ENCODE measurements at regions of chr9 and their contacts with region 1.

Region 1: DNA sequence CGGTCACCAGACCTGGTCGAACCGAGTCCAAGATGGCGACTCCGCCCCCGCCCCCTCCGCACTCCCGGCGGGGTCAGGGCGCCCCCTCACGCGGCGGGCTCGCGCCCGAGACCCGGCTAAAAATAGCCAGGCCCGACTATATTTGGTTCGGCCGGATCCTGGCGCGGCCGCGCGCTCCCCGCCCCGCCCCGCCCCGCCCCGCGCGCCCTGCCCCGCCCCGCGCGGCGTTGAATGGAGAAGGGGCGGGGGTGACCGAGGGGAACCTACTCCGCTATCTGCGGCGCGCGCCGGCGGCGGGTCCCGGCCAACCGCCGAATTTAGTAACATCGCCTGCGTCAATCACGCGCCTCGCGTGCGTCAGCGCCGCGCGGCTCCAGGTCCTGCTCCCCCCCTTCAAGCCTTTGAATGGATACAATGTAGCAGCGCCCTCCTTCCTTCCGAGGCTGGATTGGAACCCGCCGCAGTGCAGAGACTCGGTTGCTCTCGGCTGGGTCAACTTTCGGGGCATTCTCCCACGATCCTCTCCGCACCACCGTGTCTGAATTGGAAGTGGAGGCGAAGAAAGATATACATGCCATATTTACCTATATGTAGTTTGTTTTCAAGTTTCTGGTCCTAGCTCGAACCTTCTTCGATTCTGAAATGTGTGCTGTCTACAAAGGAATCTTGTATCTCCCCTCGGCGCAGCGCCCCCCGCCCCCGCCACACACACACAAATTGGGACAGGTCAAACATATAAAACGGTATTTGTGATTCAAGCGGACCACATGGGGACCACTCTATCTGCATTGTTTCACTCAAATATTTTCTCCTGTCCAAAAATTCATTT is 1.6 kb upstream of the NR4A3 start:
- DNase-seq: peak; percentile 94 to 95
- ATAC-seq: peak; percentile 67 to 80 (median 73)
- H3K4me3 ChIP-seq: peak overlapping the region; percentile 67 to 90 (median 82)
- H3K27ac ChIP-seq: peak overlapping the region; percentile 84 to 100 (median 98)
- H3K4me1 ChIP-seq: peaks cover 5 to 54% (median 32%) of the 10 kb centered on the region in 9 donors
- H3K27me3 ChIP-seq: peaks cover 0 to 30% (median 9%) of the 10 kb centered on the region in 7 donors
- CTCF ChIP-seq: peak in 5 of 9 donors; percentile 8 to 47 (median 34)

Region 2: GRCh38 chr9:99184475-99185347 is 635.4 kb before region 1 on chr9:
- intact Hi-C with region 1: loop called in 1 of 10 experiments (anchors 10 kb)
- DNase-seq: peak; percentile 81 to 89
- ATAC-seq: peak; percentile 79 to 95 (median 92)
- H3K4me3 ChIP-seq: peak overlapping the region in 8 of 10 donors; percentile 9 to 46 (median 34)
- H3K27ac ChIP-seq: peak overlapping the region in 6 of 10 donors; percentile 0 to 54 (median 43)
- H3K4me1 ChIP-seq: peaks cover 0 to 22% (median 9%) of the 10 kb centered on the region in 9 donors
- H3K27me3 ChIP-seq: no peaks in the 10 kb centered on the region
- CTCF ChIP-seq: peak; percentile 91 to 97 (median 96)

Region 3: DNA sequence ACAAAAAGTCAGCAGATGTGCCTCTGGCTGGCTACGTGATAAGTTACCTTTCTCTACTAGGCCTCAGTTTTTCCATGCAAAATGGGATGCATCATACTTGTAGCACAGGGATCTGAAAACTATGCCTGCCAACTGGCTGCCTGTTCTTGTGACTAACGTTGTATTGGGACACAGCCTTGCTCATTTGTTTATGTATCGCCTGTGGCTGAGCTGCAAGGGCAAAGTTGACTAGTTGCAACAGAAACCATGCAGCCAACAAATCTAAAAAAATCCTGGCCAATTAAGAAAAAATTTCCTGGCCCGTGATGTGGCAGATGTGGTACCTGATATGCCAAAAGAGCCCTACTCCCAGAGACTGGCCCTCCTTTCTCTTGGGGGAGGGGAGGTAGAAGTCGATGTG is 466.7 kb before region 1 on chr9:
- intact Hi-C with region 1: loop called in 7 of 10 experiments (anchors 2 to 10 kb)
- DNase-seq: no peak
- ATAC-seq: no peak
- H3K4me3 ChIP-seq: no peak overlapping the region
- H3K27ac ChIP-seq: peak overlapping the region in 1 of 10 donors; percentile 43
- H3K4me1 ChIP-seq: peaks cover 0 to 23% (median 12%) of the 10 kb centered on the region in 9 donors
- H3K27me3 ChIP-seq: no peaks in the 10 kb centered on the region
- CTCF ChIP-seq: no peak

Region 4: GRCh38 chr9:99451112-99451606 is 368.9 kb before region 1 on chr9:
- intact Hi-C with region 1: loop called in 3 of 10 experiments (anchors 5 kb)
- DNase-seq: peak; percentile 17 to 67
- ATAC-seq: peak; percentile 84 to 99 (median 97)
- H3K4me3 ChIP-seq: no peak overlapping the region
- H3K27ac ChIP-seq: peak overlapping the region in 8 of 10 donors; percentile 53 to 79 (median 63)
- H3K4me1 ChIP-seq: peaks cover 0 to 15% (median 4%) of the 10 kb centered on the region in 9 donors
- H3K27me3 ChIP-seq: peaks cover 0 to 13% (median 0%) of the 10 kb centered on the region in 7 donors
- CTCF ChIP-seq: no peak

Region 5: GRCh38 chr9:99778308-99778707 is 41.8 kb before region 1 on chr9:
- intact Hi-C with region 1: no loop called
- DNase-seq: no peak
- ATAC-seq: no peak
- H3K4me3 ChIP-seq: no peak overlapping the region
- H3K27ac ChIP-seq: no peak overlapping the region
- H3K4me1 ChIP-seq: no peaks in the 10 kb centered on the region
- H3K27me3 ChIP-seq: no peaks in the 10 kb centered on the region
- CTCF ChIP-seq: no peak

Region 6: DNA sequence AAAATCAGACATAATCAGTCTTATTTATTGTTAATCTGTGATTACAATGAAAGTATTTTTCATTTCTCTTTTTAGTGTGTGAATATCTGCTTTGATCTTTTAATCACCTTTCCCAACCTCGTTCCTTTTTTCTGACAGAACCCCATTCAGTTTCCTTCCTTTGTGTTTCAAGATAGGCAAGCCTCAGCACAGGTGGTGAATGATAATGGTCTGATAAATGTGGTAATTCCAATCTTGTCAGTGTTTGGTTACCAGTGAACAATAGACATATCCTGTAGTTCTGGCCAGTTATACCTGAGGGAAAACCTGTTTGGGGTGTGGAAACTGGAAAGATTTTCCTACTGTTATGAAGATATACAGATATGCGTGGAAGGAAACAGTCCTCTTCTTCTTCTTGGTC is 99.9 kb after region 1 on chr9:
- intact Hi-C with region 1: loop called in 1 of 10 experiments (anchors 10 kb)
- DNase-seq: no peak
- ATAC-seq: no peak
- H3K4me3 ChIP-seq: no peak overlapping the region
- H3K27ac ChIP-seq: no peak overlapping the region
- H3K4me1 ChIP-seq: no peaks in the 10 kb centered on the region
- H3K27me3 ChIP-seq: no peaks in the 10 kb centered on the region
- CTCF ChIP-seq: no peak

Region 7: GRCh38 chr9:100216178-100216787 is 396.2 kb after region 1 on chr9:
- intact Hi-C with region 1: loop called in 1 of 10 experiments (anchors 10 kb)
- DNase-seq: peak in 1 of 2 donors; percentile 54
- ATAC-seq: peak in 6 of 8 donors; percentile 48 to 70 (median 58)
- H3K4me3 ChIP-seq: no peak overlapping the region
- H3K27ac ChIP-seq: no peak overlapping the region
- H3K4me1 ChIP-seq: peaks cover 0 to 14% (median 0%) of the 10 kb centered on the region in 9 donors
- H3K27me3 ChIP-seq: no peaks in the 10 kb centered on the region
- CTCF ChIP-seq: peak; percentile 44 to 75 (median 62)